SK-N-SH (cell line): ENCODE measurements at regions of chr10 and their contacts with region 1.

Region 1: GRCh38 chr10:97792141-97792721 is 20.4 kb upstream of the SFRP5 start:
- DNase-seq: peak; percentile 84
- H3K4me3 ChIP-seq: peak overlapping the region in 1 of 2 experiments; percentile 3; a peak in 1 of 4 replicates
- H3K27ac ChIP-seq: no peak overlapping the region
- H3K4me1 ChIP-seq: peaks cover 0 to 29% of the 10 kb centered on the region in 2 experiments; a peak in 1 of 4 replicates
- H3K27me3 ChIP-seq: no peaks in the 10 kb centered on the region
- CTCF ChIP-seq: peak; percentile 91
- EP300 ChIP-seq: no peak
- RAD21 ChIP-seq: peak; percentile 82

Region 2: DNA sequence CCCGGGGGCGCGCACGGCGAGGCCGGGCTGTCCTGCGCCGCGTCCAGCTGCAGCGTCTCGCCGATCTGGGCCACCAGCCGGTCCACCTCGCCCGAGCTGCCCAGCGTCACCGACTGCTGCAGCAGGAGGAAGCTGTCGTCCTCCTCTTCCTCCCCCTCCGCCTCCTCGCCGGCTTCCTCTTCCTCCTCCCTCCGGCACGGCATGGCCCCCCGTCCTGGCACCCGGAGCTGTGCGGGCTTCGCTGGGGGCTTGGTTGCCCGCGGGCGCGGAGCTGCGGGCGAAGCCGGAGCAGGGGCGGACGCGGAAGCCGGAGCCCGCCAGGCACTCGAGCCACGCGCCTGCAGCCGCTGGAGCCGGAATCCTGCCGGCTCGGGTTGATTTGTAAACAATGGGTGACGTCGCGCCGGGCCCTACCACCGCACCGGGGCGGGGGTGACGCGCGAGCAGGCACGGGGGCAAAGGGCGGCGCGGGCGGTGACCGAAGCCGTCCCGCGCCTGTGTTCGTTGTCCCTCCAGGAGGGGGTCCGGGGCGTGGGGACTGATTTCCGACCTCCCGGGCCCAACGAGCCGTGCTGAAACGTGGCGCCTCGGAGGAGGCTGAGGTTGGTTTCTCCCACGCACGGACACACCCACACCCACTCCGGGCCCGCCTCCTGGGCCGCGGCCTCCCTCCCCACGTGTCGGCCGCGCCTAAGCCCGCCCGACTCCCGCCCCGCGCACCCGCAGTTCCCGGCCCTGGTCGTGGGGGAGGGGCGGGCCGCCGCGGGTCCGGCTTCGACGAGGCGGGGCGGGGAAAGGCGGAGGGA is 457.7 kb before region 1 on chr10 and contains the start of gene FRAT2:
- CTCF ChIA-PET with region 1: no interaction called
- POLR2A ChIA-PET with region 1: no interaction called
- DNase-seq: peak; percentile 99
- H3K4me3 ChIP-seq: peak within 1 kb of the TSS; percentile 77 to 83
- H3K27ac ChIP-seq: peak within 1 kb of the TSS; percentile 76 to 97
- H3K4me1 ChIP-seq: peaks cover 0 to 21% of the 10 kb centered on the region in 2 experiments; a peak in 1 of 4 replicates
- H3K27me3 ChIP-seq: no peaks in the 10 kb centered on the region
- CTCF ChIP-seq: no peak
- EP300 ChIP-seq: peak in 1 of 2 experiments; percentile 57; a peak in 1 of 4 replicates
- RAD21 ChIP-seq: no peak
- polyA plus RNA-seq, gene FRAT2: 2.3 and 2.4 TPM in 2 replicates

Region 3: DNA sequence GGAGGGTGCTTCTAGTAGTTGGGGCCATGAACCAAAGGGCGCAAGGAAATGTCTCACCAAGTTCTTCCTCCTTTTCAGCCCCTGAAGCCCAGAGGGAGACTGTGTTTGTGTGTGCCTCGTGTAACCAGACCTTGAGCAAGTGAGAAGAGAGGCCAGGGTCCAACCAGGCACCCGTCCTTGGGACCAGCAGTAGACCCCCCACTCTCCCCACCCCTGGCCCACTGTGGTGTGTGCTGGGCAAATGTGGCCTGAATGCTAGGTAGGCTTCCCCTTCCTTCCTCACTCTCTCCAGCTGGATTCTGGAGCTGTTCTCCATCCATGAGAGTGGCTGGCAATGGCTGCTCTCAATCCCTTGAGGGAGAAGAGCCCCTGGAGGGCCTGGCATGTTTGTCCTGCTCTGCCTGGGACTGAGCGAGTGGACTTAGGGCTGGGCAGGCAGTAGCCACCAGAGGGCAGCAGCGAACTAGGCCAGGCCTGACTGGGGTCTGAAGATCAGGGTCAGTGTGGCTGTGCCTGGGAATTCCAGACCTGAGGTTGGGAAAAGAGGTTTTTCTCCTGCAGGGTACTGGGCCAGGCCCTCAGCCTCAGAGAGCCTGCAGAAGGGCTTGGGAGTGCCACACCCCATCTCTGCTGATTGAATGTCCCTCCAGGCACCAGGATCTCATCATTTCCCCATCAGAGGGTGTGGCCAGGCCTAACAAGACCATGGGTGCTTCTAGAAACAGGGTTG is 32.9 kb before region 1 on chr10:
- CTCF ChIA-PET with region 1: interaction called, 43 read pairs
- POLR2A ChIA-PET with region 1: no interaction called
- DNase-seq: peak; percentile 94
- H3K4me3 ChIP-seq: no peak overlapping the region; a peak in 1 of 4 replicates
- H3K27ac ChIP-seq: peak overlapping the region in 1 of 2 experiments; percentile 2; a peak in 1 of 4 replicates
- H3K4me1 ChIP-seq: peaks cover 0 to 6% of the 10 kb centered on the region in 2 experiments; a peak in 1 of 4 replicates
- H3K27me3 ChIP-seq: no peaks in the 10 kb centered on the region
- CTCF ChIP-seq: peak; percentile 86
- EP300 ChIP-seq: 0 out of 4 replicates have a peak, but pooled peaks of 1 of the 2 experiments have one; percentile 11
- RAD21 ChIP-seq: peak; percentile 93

Region 4: DNA sequence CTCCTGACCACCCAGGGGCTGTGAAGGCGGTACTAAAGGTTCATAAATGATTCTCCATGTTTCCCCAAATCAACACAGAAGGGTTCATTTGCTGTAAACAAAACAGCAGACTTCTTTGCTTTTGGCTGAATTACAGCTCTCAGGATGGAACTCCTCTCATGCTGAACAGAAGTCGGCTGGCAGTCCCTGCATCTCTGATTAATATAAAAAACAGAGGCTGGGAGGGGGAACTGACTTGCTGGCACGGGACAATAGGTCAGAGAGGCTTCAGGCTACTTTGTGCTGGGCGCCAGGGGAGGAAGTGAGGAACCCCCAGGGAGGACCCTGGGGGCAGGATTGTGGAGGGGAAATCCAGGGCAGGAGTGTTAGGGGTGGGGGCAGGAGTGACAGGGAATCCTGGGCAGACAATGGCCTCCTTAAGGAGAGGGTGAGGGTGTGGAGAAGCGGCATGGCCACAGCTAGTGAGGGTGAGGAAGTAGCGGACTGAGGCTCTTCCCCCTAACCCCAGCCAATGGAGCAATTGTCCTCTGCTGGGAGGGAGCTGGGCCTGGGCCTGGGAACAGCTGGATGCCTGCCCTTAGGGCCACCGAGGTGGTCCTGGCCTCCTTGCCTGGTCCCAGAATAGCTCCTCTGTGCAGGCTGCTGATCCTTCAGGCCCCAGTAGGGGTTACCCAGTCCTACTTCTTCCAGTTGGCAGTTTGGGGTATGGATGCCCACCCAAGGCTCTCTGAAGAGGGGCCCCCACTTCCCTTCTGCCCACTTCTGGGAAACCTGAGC is 11.2 kb before region 1 on chr10:
- CTCF ChIA-PET with region 1: interaction called, 58 read pairs
- POLR2A ChIA-PET with region 1: no interaction called
- DNase-seq: peak; percentile 57
- H3K4me3 ChIP-seq: no peak overlapping the region
- H3K27ac ChIP-seq: peak overlapping the region in 1 of 2 experiments; percentile 91; a peak in 2 of 4 replicates
- H3K4me1 ChIP-seq: peaks cover 0 to 36% of the 10 kb centered on the region in 2 experiments; a peak in 2 of 4 replicates
- H3K27me3 ChIP-seq: no peaks in the 10 kb centered on the region; the same call in 1 of the 2 replicates
- CTCF ChIP-seq: no peak
- EP300 ChIP-seq: no peak
- RAD21 ChIP-seq: no peak

Region 5: GRCh38 chr10:97822261-97822687 is 30.0 kb after region 1 on chr10:
- CTCF ChIA-PET with region 1: interaction called, 50 read pairs
- POLR2A ChIA-PET with region 1: no interaction called
- DNase-seq: no peak
- H3K4me3 ChIP-seq: no peak overlapping the region
- H3K27ac ChIP-seq: no peak overlapping the region
- H3K4me1 ChIP-seq: peaks cover 0 to 4% of the 10 kb centered on the region in 2 experiments; a peak in 1 of 4 replicates
- H3K27me3 ChIP-seq: peaks cover 13% of the 10 kb centered on the region
- CTCF ChIP-seq: no peak
- EP300 ChIP-seq: no peak
- RAD21 ChIP-seq: no peak

Region 6: GRCh38 chr10:97861097-97861750 is 69.0 kb after region 1 on chr10:
- CTCF ChIA-PET with region 1: interaction called, 22 read pairs
- POLR2A ChIA-PET with region 1: no interaction called
- DNase-seq: peak; percentile 47
- H3K4me3 ChIP-seq: no peak overlapping the region
- H3K27ac ChIP-seq: no peak overlapping the region
- H3K4me1 ChIP-seq: peaks cover 0 to 6% of the 10 kb centered on the region in 2 experiments; a peak in 1 of 4 replicates
- H3K27me3 ChIP-seq: peaks cover 16% of the 10 kb centered on the region
- CTCF ChIP-seq: no peak
- EP300 ChIP-seq: no peak
- RAD21 ChIP-seq: no peak

Region 7: GRCh38 chr10:97903128-97904017 is 111.1 kb after region 1 on chr10:
- CTCF ChIA-PET with region 1: interaction called, 12 read pairs
- POLR2A ChIA-PET with region 1: no interaction called
- DNase-seq: no peak
- H3K4me3 ChIP-seq: no peak overlapping the region
- H3K27ac ChIP-seq: no peak overlapping the region
- H3K4me1 ChIP-seq: peaks cover 0 to 12% of the 10 kb centered on the region in 2 experiments; a peak in 1 of 4 replicates
- H3K27me3 ChIP-seq: peaks cover 9% of the 10 kb centered on the region; the same call in 1 of the 2 replicates
- CTCF ChIP-seq: no peak
- EP300 ChIP-seq: no peak
- RAD21 ChIP-seq: no peak; the same call in 1 of the 2 replicates